A549 (cell line): ENCODE measurements at regions of chr2 and their contacts with region 1.

Region 1: DNA sequence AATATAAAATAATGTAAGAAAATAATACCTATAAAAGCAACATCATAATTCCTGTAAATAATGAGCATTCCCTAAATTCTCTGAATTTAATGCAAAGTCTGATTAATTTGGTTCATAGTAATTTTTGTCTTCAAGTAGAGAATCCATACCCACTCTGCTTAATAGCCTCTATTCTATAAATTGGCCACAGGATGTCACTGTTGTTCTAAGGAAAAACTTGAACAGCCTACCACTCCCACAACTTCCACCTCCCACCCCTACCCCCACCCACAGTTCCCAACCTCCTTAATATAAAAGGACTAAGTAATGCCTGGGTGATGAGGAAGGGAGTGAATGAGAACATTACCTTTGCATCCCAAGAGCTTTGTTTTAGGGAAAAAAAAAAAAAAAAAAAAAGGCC is 27.2 kb upstream of the BBS5 start:
- DNase-seq: peak; percentile 33 to 64
- ATAC-seq: peak; percentile 78 to 97; a peak in 4 of 6 replicates
- H3K4me3 ChIP-seq: no peak overlapping the region
- H3K27ac ChIP-seq: no peak overlapping the region
- H3K4me1 ChIP-seq: no peaks in the 10 kb centered on the region
- CTCF ChIP-seq: peak; percentile 80
- EP300 ChIP-seq: no peak
- POLR2A ChIP-seq: no peak
- RAD21 ChIP-seq: peak; percentile 76 to 83

Region 2: GRCh38 chr2:169050478-169051240 is 401.4 kb before region 1 on chr2:
- CTCF ChIA-PET with region 1: no interaction called
- POLR2A ChIA-PET with region 1: no interaction called
- DNase-seq: peak; percentile 21 to 57
- ATAC-seq: peak; percentile 30 to 76; a peak in 4 of 6 replicates
- H3K4me3 ChIP-seq: no peak overlapping the region
- H3K27ac ChIP-seq: peak overlapping the region; percentile 51 to 65; a peak in 5 of 6 replicates
- H3K4me1 ChIP-seq: peaks cover 10% of the 10 kb centered on the region; the same call in 2 of the 3 replicates
- CTCF ChIP-seq: no peak
- EP300 ChIP-seq: 0 out of 5 replicates have a peak, but pooled peaks of 1 of the 2 experiments have one; percentile 11
- POLR2A ChIP-seq: no peak
- RAD21 ChIP-seq: no peak

Region 3: DNA sequence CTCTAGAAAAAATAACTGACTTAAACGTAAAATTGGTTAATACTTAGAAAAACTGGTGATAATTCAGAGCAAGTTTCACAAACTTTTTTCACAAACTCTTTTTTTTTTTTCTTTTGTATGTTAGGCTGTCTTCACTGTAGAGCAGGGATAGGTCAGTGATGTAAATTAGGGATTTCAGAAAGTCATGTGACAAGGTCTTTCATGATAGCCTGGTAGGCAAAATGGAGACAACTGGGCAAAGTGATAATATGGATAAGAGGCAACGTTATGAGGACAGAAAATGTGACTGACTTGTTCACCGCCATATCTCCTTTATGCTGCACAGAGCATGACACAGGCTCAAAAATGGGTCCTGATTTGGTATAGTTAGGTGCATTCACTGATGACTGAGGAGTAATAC is 12.2 kb before region 1 on chr2:
- CTCF ChIA-PET with region 1: interaction called, 18 read pairs
- POLR2A ChIA-PET with region 1: no interaction called
- DNase-seq: no peak
- ATAC-seq: no peak
- H3K4me3 ChIP-seq: no peak overlapping the region
- H3K27ac ChIP-seq: no peak overlapping the region
- H3K4me1 ChIP-seq: no peaks in the 10 kb centered on the region
- CTCF ChIP-seq: no peak
- EP300 ChIP-seq: no peak
- POLR2A ChIP-seq: no peak
- RAD21 ChIP-seq: no peak

Region 4: GRCh38 chr2:169462896-169463695 is 11.0 kb after region 1 on chr2:
- CTCF ChIA-PET with region 1: interaction called, 12 read pairs
- POLR2A ChIA-PET with region 1: no interaction called
- DNase-seq: no peak
- ATAC-seq: peak in 1 of 2 experiments; percentile 34; a peak in 4 of 6 replicates
- H3K4me3 ChIP-seq: no peak overlapping the region
- H3K27ac ChIP-seq: no peak overlapping the region
- H3K4me1 ChIP-seq: no peaks in the 10 kb centered on the region
- CTCF ChIP-seq: no peak
- EP300 ChIP-seq: no peak
- POLR2A ChIP-seq: no peak
- RAD21 ChIP-seq: no peak

Region 5: GRCh38 chr2:169771612-169772011 is 319.5 kb after region 1 on chr2:
- CTCF ChIA-PET with region 1: interaction called, 13 read pairs
- POLR2A ChIA-PET with region 1: no interaction called
- DNase-seq: no peak
- ATAC-seq: no peak
- H3K4me3 ChIP-seq: no peak overlapping the region
- H3K27ac ChIP-seq: no peak overlapping the region
- H3K4me1 ChIP-seq: no peaks in the 10 kb centered on the region
- CTCF ChIP-seq: no peak
- EP300 ChIP-seq: no peak
- POLR2A ChIP-seq: no peak
- RAD21 ChIP-seq: no peak

Region 6: GRCh38 chr2:169790581-169790980 is 338.5 kb after region 1 on chr2:
- CTCF ChIA-PET with region 1: interaction called, 11 read pairs
- POLR2A ChIA-PET with region 1: no interaction called
- DNase-seq: no peak
- ATAC-seq: no peak
- H3K4me3 ChIP-seq: no peak overlapping the region
- H3K27ac ChIP-seq: no peak overlapping the region
- H3K4me1 ChIP-seq: no peaks in the 10 kb centered on the region
- CTCF ChIP-seq: no peak
- EP300 ChIP-seq: no peak
- POLR2A ChIP-seq: no peak
- RAD21 ChIP-seq: no peak